ENCODE measurements at regions of chr3 and their contacts with region 1.

Region 1: DNA sequence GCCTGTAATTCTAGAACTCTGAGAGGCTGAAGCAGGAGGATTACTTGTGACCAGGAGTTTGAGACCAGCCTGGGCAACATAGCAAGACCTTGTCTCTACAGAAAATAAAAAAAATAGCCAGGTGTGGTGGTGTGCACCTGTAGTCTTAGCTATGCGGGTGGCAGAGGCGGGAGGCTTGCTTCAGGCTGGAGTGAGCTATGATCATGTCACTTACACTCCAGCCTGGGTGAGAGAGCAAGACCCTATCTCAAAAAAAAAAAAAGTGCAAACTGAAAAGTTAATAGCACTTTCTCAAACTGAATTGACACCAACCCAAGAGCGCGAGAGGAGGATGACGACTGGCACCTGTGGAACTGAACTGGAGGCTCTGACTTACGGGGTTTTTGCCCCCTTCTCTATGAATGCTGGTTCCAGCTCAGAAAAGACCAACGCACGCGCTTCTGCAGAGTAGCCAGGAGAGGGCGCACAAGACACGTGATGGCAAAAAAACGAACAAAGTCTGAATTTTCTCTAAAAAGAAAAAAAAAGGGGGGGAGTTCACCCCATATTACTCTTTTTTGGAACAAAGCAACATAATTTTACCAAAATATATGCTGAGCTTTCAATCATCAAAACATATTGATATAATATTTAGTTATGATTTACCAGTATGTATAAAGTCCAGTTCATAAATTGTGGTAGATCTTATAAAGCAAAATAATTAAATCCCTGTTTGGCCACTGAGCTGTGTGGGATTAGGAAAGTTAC is 23.7 kb downstream of the CFAP92 start:
- DNase-seq: peak; percentile 67
- H3K4me3 ChIP-seq: no peak overlapping the region
- H3K27ac ChIP-seq: no peak overlapping the region
- H3K4me1 ChIP-seq: no peaks in the 10 kb centered on the region; a peak in 1 of 4 replicates
- H3K27me3 ChIP-seq: peaks cover 8% of the 10 kb centered on the region; the same call in 1 of the 2 replicates
- CTCF ChIP-seq: peak; percentile 97
- EP300 ChIP-seq: no peak
- RAD21 ChIP-seq: peak; percentile 95

Region 2: DNA sequence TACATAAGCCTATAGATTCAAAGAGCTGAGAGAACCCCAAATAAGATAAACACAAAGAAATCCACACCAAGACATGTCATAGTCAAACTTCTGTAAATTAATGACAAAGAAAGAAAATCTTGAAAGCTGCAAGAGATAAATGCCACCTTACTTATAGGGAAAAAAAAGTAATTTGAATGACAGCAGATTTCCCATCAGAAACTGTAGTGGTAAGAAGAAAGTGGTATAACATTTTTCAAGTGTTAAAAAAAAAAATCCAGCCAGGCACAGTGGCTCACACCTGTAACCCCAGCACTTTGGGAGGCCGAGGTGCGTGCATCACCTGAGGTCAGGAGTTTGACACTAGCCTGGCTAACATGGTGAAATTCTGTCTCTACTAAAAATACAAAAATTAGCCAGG is 13.7 kb before region 1 on chr3:
- CTCF ChIA-PET with region 1: interaction called, 17 read pairs
- POLR2A ChIA-PET with region 1: no interaction called
- DNase-seq: no peak
- H3K4me3 ChIP-seq: no peak overlapping the region
- H3K27ac ChIP-seq: no peak overlapping the region
- H3K4me1 ChIP-seq: no peaks in the 10 kb centered on the region
- H3K27me3 ChIP-seq: no peaks in the 10 kb centered on the region
- CTCF ChIP-seq: no peak
- EP300 ChIP-seq: no peak
- RAD21 ChIP-seq: no peak

Region 3: DNA sequence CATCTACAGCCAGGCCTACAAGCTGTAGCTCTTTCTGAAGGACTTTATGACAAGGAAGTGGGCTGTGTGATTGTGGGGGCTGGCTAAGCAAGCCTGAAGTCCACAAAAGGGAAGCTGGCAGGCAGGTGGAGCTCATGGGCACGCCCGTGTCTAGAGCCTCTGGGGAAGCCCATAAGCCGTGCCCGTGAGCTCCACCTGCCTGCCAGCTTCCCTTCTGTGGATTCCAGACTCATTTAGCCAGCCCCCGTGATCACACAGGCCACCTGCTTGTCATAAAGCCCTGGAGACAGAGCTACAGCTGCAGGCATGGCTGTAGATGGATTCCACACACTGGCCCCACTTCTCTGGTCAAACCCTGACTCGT is 46.2 kb after region 1 on chr3:
- CTCF ChIA-PET with region 1: interaction called, 46 read pairs
- POLR2A ChIA-PET with region 1: no interaction called
- DNase-seq: no peak
- H3K4me3 ChIP-seq: no peak overlapping the region
- H3K27ac ChIP-seq: no peak overlapping the region; a peak in 1 of 4 replicates
- H3K4me1 ChIP-seq: peaks cover 0 to 13% of the 10 kb centered on the region in 2 experiments; a peak in 1 of 4 replicates
- H3K27me3 ChIP-seq: no peaks in the 10 kb centered on the region
- CTCF ChIP-seq: no peak
- EP300 ChIP-seq: no peak
- RAD21 ChIP-seq: no peak

Region 4: GRCh38 chr3:129068291-129068886 is 98.2 kb after region 1 on chr3:
- CTCF ChIA-PET with region 1: interaction called, 10 read pairs
- POLR2A ChIA-PET with region 1: no interaction called
- DNase-seq: no peak
- H3K4me3 ChIP-seq: no peak overlapping the region
- H3K27ac ChIP-seq: no peak overlapping the region
- H3K4me1 ChIP-seq: no peaks in the 10 kb centered on the region; a peak in 1 of 4 replicates
- H3K27me3 ChIP-seq: no peaks in the 10 kb centered on the region; the same call in 1 of the 2 replicates
- CTCF ChIP-seq: no peak
- EP300 ChIP-seq: no peak
- RAD21 ChIP-seq: no peak

Region 5: GRCh38 chr3:129112308-129113052 is 142.3 kb after region 1 on chr3:
- CTCF ChIA-PET with region 1: interaction called, 20 read pairs
- POLR2A ChIA-PET with region 1: no interaction called
- DNase-seq: no peak
- H3K4me3 ChIP-seq: no peak overlapping the region
- H3K27ac ChIP-seq: no peak overlapping the region
- H3K4me1 ChIP-seq: no peaks in the 10 kb centered on the region; a peak in 1 of 4 replicates
- H3K27me3 ChIP-seq: no peaks in the 10 kb centered on the region
- CTCF ChIP-seq: no peak
- EP300 ChIP-seq: no peak
- RAD21 ChIP-seq: no peak

Region 6: DNA sequence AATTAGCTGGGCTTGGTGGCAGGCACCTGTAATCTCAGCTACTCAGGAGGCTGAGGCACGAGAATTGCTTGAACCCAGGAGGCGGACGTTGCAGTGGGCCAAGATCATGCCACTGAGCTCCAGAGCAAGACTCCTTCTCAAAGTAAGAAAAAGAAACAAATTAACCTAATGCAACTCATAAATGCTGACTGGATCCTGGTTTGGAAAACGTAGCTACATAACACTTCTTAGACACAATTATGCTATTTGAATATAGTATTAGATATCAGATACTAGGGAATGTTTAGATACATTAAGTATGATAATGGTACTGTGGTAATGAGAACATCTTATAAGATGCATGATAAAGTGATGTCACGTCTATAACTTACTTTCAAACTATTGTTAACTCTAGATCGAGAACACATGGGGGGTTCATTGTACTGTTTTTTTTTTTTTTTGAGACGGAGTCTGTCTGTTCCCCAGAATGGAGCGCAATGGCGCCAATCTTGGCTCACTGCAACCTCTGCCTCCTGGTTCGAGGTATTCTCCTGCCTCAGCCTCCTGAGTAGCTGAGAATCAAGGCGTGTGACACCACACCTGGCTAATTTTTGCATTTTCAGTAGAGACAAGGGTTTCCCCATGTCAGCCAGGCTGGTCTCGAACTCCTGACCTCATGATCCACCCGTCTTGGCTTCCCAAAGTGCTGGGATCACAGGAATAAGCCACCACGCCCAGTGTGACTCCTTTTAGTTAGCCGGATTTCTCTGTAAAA is 196.6 kb after region 1 on chr3:
- CTCF ChIA-PET with region 1: interaction called, 28 read pairs
- POLR2A ChIA-PET with region 1: no interaction called
- DNase-seq: no peak
- H3K4me3 ChIP-seq: no peak overlapping the region
- H3K27ac ChIP-seq: no peak overlapping the region
- H3K4me1 ChIP-seq: peaks cover 0 to 11% of the 10 kb centered on the region in 2 experiments; a peak in 1 of 4 replicates
- H3K27me3 ChIP-seq: no peaks in the 10 kb centered on the region
- CTCF ChIP-seq: no peak
- EP300 ChIP-seq: no peak
- RAD21 ChIP-seq: no peak